IMR-90 (cell line): ENCODE measurements at regions of chr6 and their contacts with region 1.

Region 1: GRCh38 chr6:63923139-63923739 is 287.6 kb downstream of the PHF3 start:
- DNase-seq: peak; percentile 51
- ATAC-seq: peak; percentile 92
- H3K4me3 ChIP-seq: no peak overlapping the region
- H3K27ac ChIP-seq: no peak overlapping the region
- H3K4me1 ChIP-seq: no peaks in the 10 kb centered on the region
- H3K27me3 ChIP-seq: no peaks in the 10 kb centered on the region
- CTCF ChIP-seq: peak; percentile 76
- POLR2A ChIP-seq: no peak
- RAD21 ChIP-seq: peak; percentile 70

Region 2: DNA sequence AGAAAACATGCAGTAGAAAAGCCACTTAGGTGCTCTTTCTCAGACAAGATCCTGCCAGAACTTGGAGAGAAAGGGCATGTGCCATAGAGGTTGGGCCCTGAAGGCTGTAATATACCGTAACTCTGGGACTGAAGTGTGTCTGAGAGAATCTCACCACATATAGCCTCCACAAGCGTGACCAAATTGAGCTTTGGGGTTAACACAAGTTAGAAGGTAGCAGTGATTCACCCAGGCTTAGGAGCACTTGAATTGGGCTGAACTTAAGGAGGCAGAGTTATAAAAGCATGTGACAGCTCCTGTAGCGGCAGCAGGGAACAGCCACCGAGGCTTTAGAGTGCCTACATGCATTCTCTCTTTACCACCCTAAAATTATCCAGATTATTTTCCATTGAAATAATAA is 74.0 kb after region 1 on chr6:
- CTCF ChIA-PET with region 1: no interaction called
- POLR2A ChIA-PET with region 1: no interaction called
- dilution Hi-C with region 1: no loop called
- in situ Hi-C with region 1: no loop called
- intact Hi-C with region 1: loop called (anchors 5 kb)
- DNase-seq: no peak
- ATAC-seq: no peak
- H3K4me3 ChIP-seq: no peak overlapping the region
- H3K27ac ChIP-seq: no peak overlapping the region
- H3K4me1 ChIP-seq: no peaks in the 10 kb centered on the region
- H3K27me3 ChIP-seq: no peaks in the 10 kb centered on the region
- CTCF ChIP-seq: no peak
- POLR2A ChIP-seq: no peak
- RAD21 ChIP-seq: no peak

Region 3: GRCh38 chr6:64012351-64013001 is 89.2 kb after region 1 on chr6:
- CTCF ChIA-PET with region 1: interaction called, 3 read pairs
- POLR2A ChIA-PET with region 1: no interaction called
- dilution Hi-C with region 1: no loop called
- in situ Hi-C with region 1: no loop called
- intact Hi-C with region 1: loop called (anchors 5 kb)
- DNase-seq: peak; percentile 78
- ATAC-seq: peak; percentile 98
- H3K4me3 ChIP-seq: no peak overlapping the region
- H3K27ac ChIP-seq: no peak overlapping the region
- H3K4me1 ChIP-seq: no peaks in the 10 kb centered on the region
- H3K27me3 ChIP-seq: no peaks in the 10 kb centered on the region
- CTCF ChIP-seq: peak; percentile 91
- POLR2A ChIP-seq: no peak
- RAD21 ChIP-seq: peak; percentile 94

Region 4: GRCh38 chr6:64330694-64331307 is 407.6 kb after region 1 on chr6:
- CTCF ChIA-PET with region 1: no interaction called
- POLR2A ChIA-PET with region 1: no interaction called
- dilution Hi-C with region 1: no loop called
- in situ Hi-C with region 1: loop called (anchors 10 kb)
- intact Hi-C with region 1: loop called (anchors 1 kb)
- DNase-seq: peak; percentile 77
- ATAC-seq: peak; percentile 91
- H3K4me3 ChIP-seq: no peak overlapping the region
- H3K27ac ChIP-seq: no peak overlapping the region
- H3K4me1 ChIP-seq: no peaks in the 10 kb centered on the region
- H3K27me3 ChIP-seq: no peaks in the 10 kb centered on the region
- CTCF ChIP-seq: peak; percentile 82
- POLR2A ChIP-seq: no peak
- RAD21 ChIP-seq: peak; percentile 87